ENCODE measurements at regions of chr9 and their contacts with region 1.

Region 1: GRCh38 chr9:25935188-25935587 is 256.9 kb upstream of the TUSC1 start:
- DNase-seq: no peak
- ATAC-seq: no peak
- H3K4me3 ChIP-seq: no peak overlapping the region
- H3K27ac ChIP-seq: no peak overlapping the region
- H3K4me1 ChIP-seq: no peaks in the 10 kb centered on the region
- H3K27me3 ChIP-seq: no peaks in the 10 kb centered on the region
- CTCF ChIP-seq: no peak
- EP300 ChIP-seq: no peak
- POLR2A ChIP-seq: no peak
- RAD21 ChIP-seq: no peak

Region 2: DNA sequence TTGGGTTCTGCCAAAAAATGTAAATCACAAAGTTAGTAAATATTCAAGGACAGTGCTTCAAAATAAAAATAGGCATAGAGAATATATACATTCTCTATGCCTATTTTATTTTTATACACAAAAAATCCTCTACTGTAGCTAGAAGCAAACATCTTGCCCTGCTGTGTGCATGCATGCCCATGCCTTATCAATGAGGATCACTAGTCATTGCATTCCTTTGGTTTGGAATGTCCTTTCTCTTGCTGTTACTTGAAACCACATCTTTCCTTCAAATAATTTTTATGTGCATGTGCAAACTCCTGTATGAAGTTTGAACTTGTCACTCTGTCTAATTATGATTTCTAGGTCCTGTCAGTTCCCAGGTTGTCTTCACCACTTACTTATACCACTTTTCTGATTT is 1110.6 kb before region 1 on chr9:
- CTCF ChIA-PET with region 1: no interaction called
- POLR2A ChIA-PET with region 1: no interaction called
- RAD21 ChIA-PET with region 1: no interaction called
- SMC1A ChIA-PET with region 1: no interaction called
- in situ Hi-C with region 1: no loop called
- intact Hi-C with region 1: no loop called
- DNase-seq: no peak
- ATAC-seq: no peak
- H3K4me3 ChIP-seq: no peak overlapping the region
- H3K27ac ChIP-seq: no peak overlapping the region
- H3K4me1 ChIP-seq: no peaks in the 10 kb centered on the region
- H3K27me3 ChIP-seq: no peaks in the 10 kb centered on the region
- CTCF ChIP-seq: no peak
- EP300 ChIP-seq: no peak
- POLR2A ChIP-seq: no peak
- RAD21 ChIP-seq: no peak

Region 3: GRCh38 chr9:25891527-25891926 is 43.7 kb before region 1 on chr9:
- CTCF ChIA-PET with region 1: no interaction called
- POLR2A ChIA-PET with region 1: no interaction called
- RAD21 ChIA-PET with region 1: no interaction called
- SMC1A ChIA-PET with region 1: no interaction called
- in situ Hi-C with region 1: no loop called
- intact Hi-C with region 1: loop called (anchors 5 kb)
- DNase-seq: no peak
- ATAC-seq: no peak
- H3K4me3 ChIP-seq: no peak overlapping the region
- H3K27ac ChIP-seq: no peak overlapping the region
- H3K4me1 ChIP-seq: no peaks in the 10 kb centered on the region
- H3K27me3 ChIP-seq: no peaks in the 10 kb centered on the region
- CTCF ChIP-seq: no peak
- EP300 ChIP-seq: no peak
- POLR2A ChIP-seq: no peak
- RAD21 ChIP-seq: no peak

Region 4: DNA sequence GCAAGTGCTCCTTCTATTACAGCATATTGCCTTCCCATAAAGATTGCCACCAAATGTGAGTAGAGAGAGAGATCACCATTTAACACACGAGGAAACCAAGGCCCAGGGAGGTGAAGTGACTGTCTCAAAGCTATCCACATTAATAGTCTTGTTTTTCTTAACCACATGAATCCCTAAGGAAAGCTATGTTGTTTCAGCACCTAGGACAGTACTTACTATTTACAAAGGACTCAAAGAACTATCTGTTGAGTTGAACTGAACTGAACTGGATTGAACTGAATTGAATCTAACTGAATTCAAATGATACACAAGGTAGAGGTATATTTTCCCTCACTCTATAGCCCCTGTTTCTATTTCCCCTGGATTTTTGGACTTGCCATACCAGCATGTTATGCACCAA is 527.0 kb after region 1 on chr9:
- CTCF ChIA-PET with region 1: no interaction called
- POLR2A ChIA-PET with region 1: no interaction called
- RAD21 ChIA-PET with region 1: no interaction called
- SMC1A ChIA-PET with region 1: no interaction called
- in situ Hi-C with region 1: no loop called
- intact Hi-C with region 1: no loop called
- DNase-seq: no peak
- ATAC-seq: no peak
- H3K4me3 ChIP-seq: no peak overlapping the region
- H3K27ac ChIP-seq: no peak overlapping the region
- H3K4me1 ChIP-seq: no peaks in the 10 kb centered on the region
- H3K27me3 ChIP-seq: no peaks in the 10 kb centered on the region
- CTCF ChIP-seq: no peak
- EP300 ChIP-seq: no peak
- POLR2A ChIP-seq: no peak
- RAD21 ChIP-seq: no peak